SK-N-SH (cell line): ENCODE measurements at regions of chr11 and their contacts with region 1.

Region 1: GRCh38 chr11:1832211-1832919 is 2.4 kb upstream of the SYT8 start:
- DNase-seq: peak; percentile 95
- H3K4me3 ChIP-seq: no peak overlapping the region; a peak in 1 of 4 replicates
- H3K27ac ChIP-seq: no peak overlapping the region; a peak in 1 of 4 replicates
- H3K4me1 ChIP-seq: peaks cover 6 to 65% of the 10 kb centered on the region in 2 experiments; a peak in 3 of 4 replicates
- H3K27me3 ChIP-seq: no peaks in the 10 kb centered on the region
- CTCF ChIP-seq: peak; percentile 91
- EP300 ChIP-seq: no peak
- RAD21 ChIP-seq: peak; percentile 75

Region 2: DNA sequence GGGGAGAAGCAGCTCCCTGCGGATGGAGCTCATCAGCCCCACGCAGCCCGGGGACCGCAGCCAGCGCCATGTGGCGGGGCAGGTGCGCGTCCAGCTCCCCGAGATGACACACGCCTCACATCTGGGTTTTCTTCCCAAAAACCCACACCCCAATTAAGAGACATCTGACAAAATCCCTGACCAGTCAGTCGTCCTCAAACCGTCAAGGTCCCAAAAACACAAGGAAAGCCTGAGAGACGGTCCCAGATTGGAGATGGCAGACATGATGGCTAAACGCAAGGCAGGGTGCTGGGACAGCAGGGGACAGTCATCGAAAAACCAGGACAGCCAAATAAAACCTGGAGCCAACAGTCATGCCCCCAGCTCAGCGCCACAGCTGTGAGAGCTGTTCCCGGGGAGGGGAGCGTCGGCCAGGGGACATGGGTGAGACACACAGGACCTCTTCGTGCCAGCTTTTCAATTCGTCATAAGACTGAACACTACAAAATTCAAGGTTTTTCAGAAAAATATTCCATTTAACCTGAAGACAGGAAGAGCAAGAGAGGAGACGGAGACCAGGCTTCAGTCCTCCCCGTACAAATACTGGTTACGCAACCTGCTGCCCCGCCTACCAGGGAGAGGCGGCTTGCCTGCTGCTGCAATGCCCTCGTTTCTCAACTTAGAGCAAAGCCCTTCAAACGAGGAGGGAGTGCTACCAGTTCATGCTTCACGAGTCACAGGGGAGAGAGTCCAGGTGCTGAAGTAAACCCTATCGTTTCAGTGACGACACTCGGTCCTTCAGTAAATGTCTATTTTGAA is 533.5 kb before region 1 on chr11:
- CTCF ChIA-PET with region 1: no interaction called
- POLR2A ChIA-PET with region 1: no interaction called
- DNase-seq: no peak
- H3K4me3 ChIP-seq: no peak overlapping the region
- H3K27ac ChIP-seq: no peak overlapping the region
- H3K4me1 ChIP-seq: no peaks in the 10 kb centered on the region; a peak in 1 of 4 replicates
- H3K27me3 ChIP-seq: no peaks in the 10 kb centered on the region
- CTCF ChIP-seq: no peak
- EP300 ChIP-seq: no peak
- RAD21 ChIP-seq: no peak

Region 3: DNA sequence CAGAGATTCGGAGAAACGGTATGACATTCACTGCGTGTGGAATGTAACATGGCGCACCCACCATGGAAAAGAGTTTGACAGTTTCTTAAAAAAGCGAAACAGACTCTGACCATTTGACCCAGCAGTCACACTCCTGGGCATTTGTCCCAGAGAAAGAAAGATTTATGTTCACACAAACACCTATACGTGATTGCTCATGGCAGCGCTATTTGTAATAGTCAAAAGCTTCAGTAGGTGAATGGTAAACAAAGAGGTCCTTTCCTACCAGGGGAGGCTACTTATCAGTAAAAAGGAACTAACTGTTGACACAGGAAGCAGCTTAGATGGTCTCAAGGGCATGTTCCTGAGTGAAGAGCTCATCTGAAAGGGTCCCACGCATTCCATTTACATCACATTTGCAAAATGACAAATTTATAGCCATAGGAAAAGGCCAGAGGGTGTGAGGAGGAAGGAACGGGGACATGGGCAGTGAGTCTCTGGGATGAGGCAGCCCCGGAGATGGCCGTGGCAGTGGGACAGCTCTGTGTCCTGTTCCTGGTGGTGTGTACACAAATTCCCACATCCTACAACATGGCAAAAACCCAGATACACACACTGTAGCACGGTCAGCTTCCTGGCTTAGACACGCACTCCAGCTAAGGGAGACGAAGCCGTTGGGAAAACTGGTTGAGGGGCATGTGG is 150.0 kb before region 1 on chr11:
- CTCF ChIA-PET with region 1: interaction called, 40 read pairs
- POLR2A ChIA-PET with region 1: no interaction called
- DNase-seq: no peak
- H3K4me3 ChIP-seq: no peak overlapping the region
- H3K27ac ChIP-seq: no peak overlapping the region
- H3K4me1 ChIP-seq: no peaks in the 10 kb centered on the region
- H3K27me3 ChIP-seq: no peaks in the 10 kb centered on the region
- CTCF ChIP-seq: no peak
- EP300 ChIP-seq: no peak
- RAD21 ChIP-seq: no peak

Region 4: DNA sequence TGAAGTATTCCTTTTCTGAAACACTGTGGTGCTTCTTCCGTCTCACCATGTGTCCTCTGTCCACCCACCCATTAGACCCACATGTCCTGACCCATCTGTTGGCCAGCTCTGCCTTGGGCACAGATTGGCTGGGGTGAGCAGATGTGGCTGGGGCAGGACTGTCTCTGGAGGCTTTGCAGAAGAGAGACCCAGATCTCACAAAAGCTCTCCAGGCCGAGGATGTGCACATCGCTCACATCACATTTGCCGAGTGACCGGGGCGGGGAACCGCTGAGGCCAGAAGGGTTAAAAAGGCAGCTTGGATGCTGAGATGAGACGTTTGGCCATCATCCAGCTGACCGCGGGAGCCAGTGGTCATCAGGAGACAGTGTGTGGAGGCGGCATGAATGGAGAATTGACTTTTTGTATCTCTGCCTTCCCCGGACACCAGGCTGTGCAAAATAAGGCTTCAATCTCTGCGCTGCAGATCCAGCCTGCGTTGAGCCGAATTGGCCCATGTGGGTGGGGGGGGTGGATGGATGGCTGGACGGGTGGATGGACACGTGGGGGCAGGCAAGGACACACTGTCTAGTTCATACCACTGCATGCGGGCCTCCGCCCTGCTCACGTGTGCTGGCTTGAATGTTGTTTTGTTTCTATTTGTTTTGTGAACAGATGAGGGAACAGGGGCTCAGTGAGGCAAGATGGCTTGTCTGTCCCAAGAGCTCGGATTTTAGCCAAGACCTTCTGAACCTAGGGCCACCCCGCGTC is 88.1 kb before region 1 on chr11:
- CTCF ChIA-PET with region 1: interaction called, 25 read pairs
- POLR2A ChIA-PET with region 1: interaction called, 3 read pairs
- DNase-seq: peak; percentile 63
- H3K4me3 ChIP-seq: no peak overlapping the region
- H3K27ac ChIP-seq: peak overlapping the region in 1 of 2 experiments; percentile 92; a peak in 2 of 4 replicates
- H3K4me1 ChIP-seq: peaks cover 0 to 52% of the 10 kb centered on the region in 2 experiments; a peak in 1 of 4 replicates
- H3K27me3 ChIP-seq: no peaks in the 10 kb centered on the region
- CTCF ChIP-seq: no peak
- EP300 ChIP-seq: no peak
- RAD21 ChIP-seq: no peak

Region 5: DNA sequence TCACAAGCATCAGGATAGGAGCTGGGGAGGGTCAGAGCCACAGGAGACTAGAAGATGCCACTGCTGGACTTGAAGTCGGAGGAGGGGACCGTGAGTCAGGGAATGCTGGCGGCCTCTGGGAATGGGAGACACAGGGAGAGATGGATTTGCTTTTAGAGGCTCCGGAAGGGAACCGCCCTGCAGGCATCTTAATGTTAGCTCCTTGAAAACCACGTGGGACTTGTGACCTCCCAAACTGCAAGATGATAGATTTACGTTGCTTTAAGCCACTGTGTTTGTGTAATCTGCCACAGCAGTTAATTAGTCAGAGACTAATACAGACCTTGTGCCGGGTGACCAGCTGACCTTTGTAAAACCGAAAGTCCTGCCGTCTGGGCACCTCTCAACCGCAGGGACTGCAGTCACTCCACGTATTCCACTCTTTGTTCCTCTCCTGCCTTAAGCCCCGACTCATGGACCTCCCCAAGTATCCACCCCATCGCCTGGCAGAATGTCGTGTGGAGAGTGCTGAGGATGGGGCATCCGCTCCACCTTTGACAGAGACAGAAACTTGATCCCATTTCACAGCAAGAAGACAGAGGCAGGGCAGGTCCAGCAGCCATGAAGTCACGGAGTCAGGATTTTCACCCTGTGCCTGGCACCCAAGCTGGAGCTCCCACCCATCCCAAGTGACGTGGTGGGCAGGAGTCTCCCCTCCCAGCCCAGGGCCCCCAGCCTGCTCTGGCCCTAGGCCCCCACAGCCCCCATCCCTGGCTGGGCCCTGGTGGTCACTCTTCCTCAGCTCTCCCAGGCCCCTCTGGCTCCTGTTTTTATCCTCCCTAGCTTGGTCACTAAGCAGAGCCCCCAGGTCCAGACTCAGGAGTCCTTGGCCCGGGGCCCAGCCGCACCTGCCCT is 49.3 kb before region 1 on chr11:
- CTCF ChIA-PET with region 1: interaction called, 10 read pairs
- POLR2A ChIA-PET with region 1: no interaction called
- DNase-seq: peak; percentile 14
- H3K4me3 ChIP-seq: no peak overlapping the region
- H3K27ac ChIP-seq: no peak overlapping the region
- H3K4me1 ChIP-seq: peaks cover 0 to 7% of the 10 kb centered on the region in 2 experiments; a peak in 1 of 4 replicates
- H3K27me3 ChIP-seq: no peaks in the 10 kb centered on the region
- CTCF ChIP-seq: no peak
- EP300 ChIP-seq: no peak
- RAD21 ChIP-seq: no peak

Region 6: GRCh38 chr11:1852877-1853276 is 20.5 kb after region 1 on chr11 and contains the start of gene LSP1:
- CTCF ChIA-PET with region 1: interaction called, 28 read pairs
- POLR2A ChIA-PET with region 1: interaction called, 3 read pairs
- DNase-seq: no peak
- H3K4me3 ChIP-seq: no peak within 1 kb of the TSS
- H3K27ac ChIP-seq: no peak within 1 kb of the TSS
- H3K4me1 ChIP-seq: no peaks in the 10 kb centered on the region; a peak in 1 of 4 replicates
- H3K27me3 ChIP-seq: no peaks in the 10 kb centered on the region
- CTCF ChIP-seq: no peak
- EP300 ChIP-seq: no peak
- RAD21 ChIP-seq: no peak
- polyA plus RNA-seq, gene LSP1: 0.34 and 0.38 TPM in 2 replicates

Region 7: GRCh38 chr11:2036863-2037486 is 204.6 kb after region 1 on chr11:
- CTCF ChIA-PET with region 1: interaction called, 12 read pairs
- POLR2A ChIA-PET with region 1: no interaction called
- DNase-seq: no peak
- H3K4me3 ChIP-seq: no peak overlapping the region
- H3K27ac ChIP-seq: no peak overlapping the region
- H3K4me1 ChIP-seq: no peaks in the 10 kb centered on the region
- H3K27me3 ChIP-seq: no peaks in the 10 kb centered on the region
- CTCF ChIP-seq: no peak
- EP300 ChIP-seq: no peak
- RAD21 ChIP-seq: no peak